Activated CD8-positive, alpha-beta T cell treated with anti-CD3 and anti-CD28 coated beads for 36 hours (primary cell): ENCODE measurements at regions of chr16 and their contacts with region 1.

Region 1: DNA sequence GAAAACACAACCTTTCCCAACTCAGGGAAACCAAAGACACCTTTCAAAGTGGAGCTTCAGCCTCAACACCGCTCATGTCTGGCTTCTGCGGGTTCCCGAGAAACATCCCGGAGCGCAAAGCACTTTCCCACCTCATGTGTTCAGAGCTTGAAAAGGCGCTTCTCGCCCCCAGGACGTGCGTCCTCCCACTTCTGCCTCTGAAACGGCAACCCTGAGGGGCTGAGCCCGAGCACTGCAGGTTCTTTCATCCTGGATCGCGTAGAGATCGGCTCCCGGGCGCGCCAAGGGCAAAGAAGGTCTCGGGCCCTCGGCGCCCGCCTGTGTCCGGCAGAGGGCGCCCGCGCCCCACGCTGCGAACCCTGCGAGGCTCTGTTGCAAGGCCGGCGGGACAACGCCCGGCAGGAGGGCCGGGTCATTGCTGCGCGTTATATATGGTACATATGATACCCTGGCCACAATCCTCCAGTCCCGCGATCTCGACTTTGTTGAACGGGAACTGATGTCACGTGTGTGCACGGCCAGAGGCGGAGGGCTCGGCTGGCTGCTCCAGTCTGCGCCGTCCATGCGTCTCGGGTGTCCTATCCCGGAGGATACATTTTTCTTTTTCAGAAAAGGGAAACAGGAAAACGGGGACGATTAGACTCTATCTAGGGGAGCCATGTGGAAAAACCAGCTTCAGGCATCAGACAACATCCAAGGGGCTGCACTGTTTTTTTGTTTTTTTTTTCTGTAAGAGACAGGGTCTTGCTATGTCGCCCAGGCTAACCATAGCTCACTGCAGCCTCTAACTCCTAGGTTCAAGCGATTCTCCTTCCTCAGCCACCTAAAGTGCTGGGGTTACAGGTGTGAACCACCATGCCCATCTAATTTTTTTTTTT is 19.1 kb downstream of the COQ7 start:
- DNase-seq: peak; percentile 81
- ATAC-seq: peak; percentile 95
- H3K4me3 Mint-ChIP-seq: peak overlapping the region; percentile 47
- H3K27ac Mint-ChIP-seq: no peak overlapping the region
- H3K4me1 Mint-ChIP-seq: peaks cover 6% of the 10 kb centered on the region
- H3K27me3 Mint-ChIP-seq: peaks cover 6% of the 10 kb centered on the region
- CTCF ChIP-seq: peak; percentile 98

Region 2: DNA sequence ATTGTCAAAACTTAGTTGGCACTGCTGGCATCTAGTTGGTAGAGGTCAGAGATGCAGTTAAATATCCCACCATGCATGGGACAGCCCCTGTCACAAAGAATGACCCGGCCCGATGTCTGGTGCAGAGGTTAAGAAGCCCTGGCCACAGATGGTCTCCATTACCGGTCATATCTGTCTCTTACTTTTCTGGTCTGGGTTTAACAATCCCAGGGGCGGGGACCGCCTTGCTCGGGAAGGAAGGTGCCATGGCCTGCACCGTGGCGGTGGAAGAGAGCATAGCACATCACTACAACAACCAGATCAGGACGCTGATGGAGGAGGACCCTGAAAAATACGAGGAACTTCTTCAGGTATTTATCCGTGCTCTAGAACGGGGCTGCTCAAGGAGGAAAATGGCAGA is 11.1 kb before region 1 on chr16:
- CTCF ChIA-PET with region 1: interaction called, 13 read pairs
- POLR2A ChIA-PET with region 1: no interaction called
- intact Hi-C with region 1: no loop called
- DNase-seq: no peak
- ATAC-seq: no peak
- H3K4me3 Mint-ChIP-seq: no peak overlapping the region
- H3K27ac Mint-ChIP-seq: no peak overlapping the region
- H3K4me1 Mint-ChIP-seq: no peaks in the 10 kb centered on the region
- H3K27me3 Mint-ChIP-seq: no peaks in the 10 kb centered on the region
- CTCF ChIP-seq: no peak

Region 3: GRCh38 chr16:19116707-19117449 is 30.3 kb after region 1 on chr16:
- CTCF ChIA-PET with region 1: interaction called, 11 read pairs
- POLR2A ChIA-PET with region 1: no interaction called
- intact Hi-C with region 1: no loop called
- DNase-seq: no peak
- ATAC-seq: no peak
- H3K4me3 Mint-ChIP-seq: no peak overlapping the region
- H3K27ac Mint-ChIP-seq: no peak overlapping the region
- H3K4me1 Mint-ChIP-seq: peaks cover 25% of the 10 kb centered on the region
- H3K27me3 Mint-ChIP-seq: peaks cover 25% of the 10 kb centered on the region
- CTCF ChIP-seq: no peak

Region 4: DNA sequence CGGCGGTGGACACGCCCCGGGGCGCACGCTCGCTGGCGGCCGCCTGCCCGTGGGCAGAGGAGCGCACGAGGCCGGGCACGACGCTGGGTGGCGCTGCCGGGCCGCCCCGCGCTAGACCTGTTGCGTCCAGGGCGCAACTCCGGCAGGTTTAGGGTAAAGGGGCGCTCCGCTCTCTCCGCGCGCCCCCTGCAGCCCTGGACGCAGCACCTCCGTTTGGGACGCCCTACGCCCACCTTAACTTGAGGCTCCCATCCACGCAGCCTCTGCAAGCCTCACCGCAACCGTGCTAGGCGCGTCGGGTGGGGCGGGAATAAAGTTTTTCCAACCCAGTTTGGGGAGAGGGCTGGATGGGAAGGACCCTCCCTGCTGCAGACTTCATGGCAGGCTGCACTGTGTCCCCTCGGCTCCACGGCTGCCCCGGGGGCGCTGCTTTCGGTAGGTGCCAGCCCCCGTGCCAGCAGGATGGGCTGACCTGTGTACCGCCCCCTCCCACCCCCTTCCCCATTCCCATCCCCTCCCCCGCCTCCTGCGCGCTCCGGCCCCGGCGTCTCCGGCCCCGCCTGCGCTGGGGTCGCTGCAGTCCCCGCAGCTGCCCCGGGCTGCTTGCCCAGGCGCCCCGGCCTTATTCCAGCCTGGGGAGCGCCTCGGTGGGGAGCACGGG is 81.3 kb after region 1 on chr16 and contains the start of gene SYT17:
- CTCF ChIA-PET with region 1: interaction called, 4 read pairs
- POLR2A ChIA-PET with region 1: interaction called, 3 read pairs
- intact Hi-C with region 1: loop called (anchors 10 kb)
- DNase-seq: peak; percentile 53
- ATAC-seq: peak; percentile 94
- H3K4me3 Mint-ChIP-seq: no peak within 1 kb of the TSS
- H3K27ac Mint-ChIP-seq: no peak within 1 kb of the TSS
- H3K4me1 Mint-ChIP-seq: no peaks in the 10 kb centered on the region
- H3K27me3 Mint-ChIP-seq: peaks cover 13% of the 10 kb centered on the region
- CTCF ChIP-seq: peak; percentile 70
- total RNA-seq, gene SYT17: 0.59 TPM in 1 of 2 experiments, not detected in the other

Region 5: GRCh38 chr16:19375561-19376158 is 289.1 kb after region 1 on chr16:
- CTCF ChIA-PET with region 1: interaction called, 6 read pairs
- POLR2A ChIA-PET with region 1: no interaction called
- intact Hi-C with region 1: loop called (anchors 5 kb)
- DNase-seq: peak; percentile 52
- ATAC-seq: peak; percentile 67
- H3K4me3 Mint-ChIP-seq: no peak overlapping the region
- H3K27ac Mint-ChIP-seq: no peak overlapping the region
- H3K4me1 Mint-ChIP-seq: peaks cover 2% of the 10 kb centered on the region
- H3K27me3 Mint-ChIP-seq: peaks cover 2% of the 10 kb centered on the region
- CTCF ChIP-seq: peak; percentile 81